AG04449 (cell line): ENCODE measurements at regions of chr15 and their contacts with region 1.

Region 1: DNA sequence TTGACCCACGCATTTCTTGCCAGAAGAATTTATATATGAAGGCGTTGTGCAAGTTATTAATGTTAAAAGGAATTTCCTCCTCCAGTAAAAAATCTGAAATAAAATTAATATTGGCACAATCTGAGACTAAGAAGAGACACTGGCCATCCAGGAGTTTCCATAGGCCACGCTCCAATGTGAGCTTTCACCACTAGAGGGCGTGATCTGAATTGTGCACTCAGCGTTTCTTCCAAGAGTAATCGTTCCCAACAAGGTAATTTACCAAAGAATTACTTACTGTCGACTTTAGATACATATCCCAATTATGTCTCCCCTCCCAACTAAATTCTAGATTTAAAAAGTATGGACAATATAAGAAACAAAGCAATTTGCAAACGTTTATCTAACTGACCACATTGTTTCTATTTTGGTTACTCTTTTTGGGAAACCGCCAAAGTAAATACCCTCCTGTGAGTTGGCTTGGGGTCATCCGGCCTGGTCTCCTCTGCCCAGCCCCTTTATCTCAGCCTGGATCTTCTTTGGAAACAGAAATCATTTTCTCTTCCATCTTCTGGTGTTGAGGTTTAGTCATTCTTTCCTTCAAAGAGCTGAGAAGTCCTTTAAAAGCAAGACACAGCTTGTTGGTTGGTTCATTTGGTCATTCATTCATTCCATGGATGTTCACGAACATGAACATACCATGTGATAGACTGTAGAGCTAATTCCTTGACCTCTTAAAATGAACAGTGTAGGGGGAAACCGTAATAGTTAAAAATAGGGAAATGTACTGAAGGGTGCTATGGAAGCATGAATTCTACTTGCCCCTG is 26.2 kb downstream of the POLR2M start:
- DNase-seq: no peak
- H3K4me3 ChIP-seq: no peak overlapping the region
- CTCF ChIP-seq: peak; percentile 75

Region 2: GRCh38 chr15:56428821-56429458 is 1303.8 kb before region 1 on chr15:
- CTCF ChIA-PET with region 1: no interaction called
- POLR2A ChIA-PET with region 1: no interaction called
- DNase-seq: no peak
- H3K4me3 ChIP-seq: no peak overlapping the region
- CTCF ChIP-seq: peak; percentile 42

Region 3: DNA sequence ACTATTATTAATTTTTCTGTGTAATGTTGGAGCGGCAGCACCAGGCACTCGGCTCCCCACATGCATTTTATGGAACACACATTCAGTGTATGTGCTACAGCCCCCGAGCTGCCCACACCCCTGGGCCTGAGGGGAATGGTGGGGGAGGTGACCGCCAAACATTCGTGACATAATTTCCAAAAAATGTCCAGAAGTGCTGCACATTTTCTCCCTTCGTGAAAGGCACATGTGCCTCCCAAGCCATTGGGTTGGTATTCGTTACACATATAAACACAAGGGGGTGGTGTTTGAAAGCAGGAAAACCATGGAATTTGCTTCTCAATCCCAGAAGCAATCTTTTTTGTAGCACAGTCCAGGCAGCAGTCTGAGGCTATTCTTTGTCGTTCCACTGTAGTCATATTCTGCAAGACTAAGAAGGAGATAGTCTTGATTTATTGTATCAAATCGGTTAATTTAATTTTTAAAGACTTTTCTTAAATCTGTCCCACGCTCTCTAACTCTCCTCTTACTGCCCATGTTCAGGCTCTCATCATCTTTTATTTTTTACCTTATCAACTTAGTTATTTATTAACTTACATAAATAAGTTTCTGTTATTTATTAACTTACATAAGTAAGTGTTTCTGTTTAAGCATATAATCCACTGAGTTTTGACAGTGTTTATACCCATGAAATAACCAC is 65.4 kb before region 1 on chr15:
- CTCF ChIA-PET with region 1: interaction called, 10 read pairs
- POLR2A ChIA-PET with region 1: no interaction called
- DNase-seq: peak; percentile 21
- H3K4me3 ChIP-seq: no peak overlapping the region
- CTCF ChIP-seq: peak; percentile 51

Region 4: DNA sequence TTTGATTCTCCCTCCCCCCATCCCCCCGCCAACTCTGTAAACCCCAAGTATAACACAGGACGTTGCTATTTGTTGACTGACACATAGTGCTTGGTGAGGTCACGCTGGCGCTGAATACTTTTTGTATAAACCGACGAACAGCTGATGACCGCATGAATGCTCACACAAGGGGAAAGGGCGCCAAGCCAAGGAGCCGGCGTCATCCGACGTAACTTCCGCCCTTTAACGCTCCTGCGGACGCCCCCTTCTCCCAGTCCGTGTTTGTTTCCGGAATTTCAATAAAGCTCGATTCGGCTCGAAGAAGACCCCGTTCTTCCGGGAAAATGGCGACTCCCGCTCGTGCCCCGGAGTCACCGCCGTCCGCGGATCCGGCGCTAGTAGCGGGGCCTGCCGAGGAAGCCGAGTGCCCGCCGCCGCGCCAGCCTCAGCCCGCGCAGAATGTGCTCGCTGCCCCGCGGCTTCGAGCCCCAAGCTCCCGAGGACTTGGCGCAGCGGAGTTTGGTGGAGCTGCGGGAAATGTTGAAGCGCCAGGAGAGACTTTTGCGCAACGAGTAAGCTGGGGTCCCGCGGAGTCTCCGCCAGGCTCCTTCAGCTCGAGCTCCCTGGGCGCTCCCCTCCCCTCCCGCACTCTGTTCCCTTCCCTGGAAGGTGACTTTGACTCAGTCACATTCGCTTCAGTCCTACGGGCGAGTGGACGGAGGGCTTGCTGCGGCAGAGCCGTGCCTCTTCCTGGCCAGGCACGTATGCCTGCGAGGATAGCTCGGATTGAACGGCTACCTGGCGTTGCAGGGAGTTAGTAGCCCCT is 26.1 kb before region 1 on chr15 and contains the start of gene POLR2M:
- CTCF ChIA-PET with region 1: interaction called, 22 read pairs
- POLR2A ChIA-PET with region 1: no interaction called
- DNase-seq: peak; percentile 91
- H3K4me3 ChIP-seq: peak within 1 kb of the TSS; percentile 93
- CTCF ChIP-seq: no peak

Region 5: GRCh38 chr15:57720867-57721266 is 11.9 kb before region 1 on chr15:
- CTCF ChIA-PET with region 1: interaction called, 54 read pairs
- POLR2A ChIA-PET with region 1: no interaction called
- DNase-seq: no peak
- H3K4me3 ChIP-seq: no peak overlapping the region
- CTCF ChIP-seq: no peak

Region 6: GRCh38 chr15:57743424-57743823 is 10.7 kb after region 1 on chr15:
- CTCF ChIA-PET with region 1: interaction called, 78 read pairs
- POLR2A ChIA-PET with region 1: no interaction called
- DNase-seq: no peak
- H3K4me3 ChIP-seq: no peak overlapping the region
- CTCF ChIP-seq: peak; percentile 3

Region 7: DNA sequence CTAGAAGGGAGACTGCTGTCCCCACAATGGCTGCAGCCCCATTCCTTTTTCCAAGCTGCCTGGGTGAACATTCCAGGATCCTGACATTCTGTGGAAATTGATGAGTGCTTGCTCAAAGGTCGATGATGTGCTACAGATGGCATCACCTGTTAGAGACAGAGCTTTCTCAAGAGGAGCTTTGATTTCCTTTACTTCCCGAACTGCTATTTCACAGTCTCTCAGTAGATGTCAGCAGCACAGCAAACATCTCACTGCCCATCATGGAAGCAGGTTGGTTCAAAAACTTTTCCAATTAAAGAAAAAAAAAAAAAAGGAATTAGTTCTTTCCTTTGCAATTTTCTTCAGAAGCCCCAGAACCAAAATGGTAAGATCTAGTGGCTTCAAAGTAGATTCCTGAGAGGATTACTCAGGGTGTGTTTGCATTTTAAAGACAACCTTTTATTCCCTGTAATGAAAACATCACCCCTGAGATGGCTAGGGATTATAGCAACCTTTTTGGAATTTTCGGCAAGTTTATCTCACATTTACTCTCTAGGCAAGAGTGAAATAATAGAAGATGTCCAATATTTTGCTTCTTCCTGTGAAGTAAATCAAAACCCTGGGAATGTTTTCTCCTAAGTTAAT is 18.6 kb after region 1 on chr15:
- CTCF ChIA-PET with region 1: interaction called, 78 read pairs
- POLR2A ChIA-PET with region 1: no interaction called
- DNase-seq: no peak
- H3K4me3 ChIP-seq: no peak overlapping the region
- CTCF ChIP-seq: peak; percentile 66

Region 8: DNA sequence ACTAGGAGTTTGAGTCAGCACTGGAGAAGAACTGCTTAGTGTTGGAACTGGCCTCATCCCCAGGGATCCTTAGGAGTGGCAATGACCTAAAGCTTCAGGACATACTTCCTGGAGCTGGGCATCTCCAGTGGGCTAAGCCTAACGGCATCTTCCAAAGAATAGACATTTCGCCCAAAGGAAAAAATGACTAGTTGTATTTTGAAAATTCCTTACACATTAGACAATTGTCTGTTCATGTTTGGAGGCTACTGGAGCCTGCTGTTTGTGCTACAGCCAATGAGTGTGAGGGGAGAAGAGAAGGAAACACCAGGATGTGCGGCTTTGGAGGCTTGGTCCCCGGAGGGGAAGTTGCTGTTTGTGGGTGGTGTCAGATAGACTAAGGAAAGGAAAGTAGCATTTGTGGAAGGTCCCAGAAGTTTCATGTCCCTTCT is 51.4 kb after region 1 on chr15:
- CTCF ChIA-PET with region 1: no interaction called
- POLR2A ChIA-PET with region 1: no interaction called
- DNase-seq: no peak
- H3K4me3 ChIP-seq: no peak overlapping the region
- CTCF ChIP-seq: no peak